ENCODE measurements at regions of chr2 and their contacts with region 1.

Region 1: DNA sequence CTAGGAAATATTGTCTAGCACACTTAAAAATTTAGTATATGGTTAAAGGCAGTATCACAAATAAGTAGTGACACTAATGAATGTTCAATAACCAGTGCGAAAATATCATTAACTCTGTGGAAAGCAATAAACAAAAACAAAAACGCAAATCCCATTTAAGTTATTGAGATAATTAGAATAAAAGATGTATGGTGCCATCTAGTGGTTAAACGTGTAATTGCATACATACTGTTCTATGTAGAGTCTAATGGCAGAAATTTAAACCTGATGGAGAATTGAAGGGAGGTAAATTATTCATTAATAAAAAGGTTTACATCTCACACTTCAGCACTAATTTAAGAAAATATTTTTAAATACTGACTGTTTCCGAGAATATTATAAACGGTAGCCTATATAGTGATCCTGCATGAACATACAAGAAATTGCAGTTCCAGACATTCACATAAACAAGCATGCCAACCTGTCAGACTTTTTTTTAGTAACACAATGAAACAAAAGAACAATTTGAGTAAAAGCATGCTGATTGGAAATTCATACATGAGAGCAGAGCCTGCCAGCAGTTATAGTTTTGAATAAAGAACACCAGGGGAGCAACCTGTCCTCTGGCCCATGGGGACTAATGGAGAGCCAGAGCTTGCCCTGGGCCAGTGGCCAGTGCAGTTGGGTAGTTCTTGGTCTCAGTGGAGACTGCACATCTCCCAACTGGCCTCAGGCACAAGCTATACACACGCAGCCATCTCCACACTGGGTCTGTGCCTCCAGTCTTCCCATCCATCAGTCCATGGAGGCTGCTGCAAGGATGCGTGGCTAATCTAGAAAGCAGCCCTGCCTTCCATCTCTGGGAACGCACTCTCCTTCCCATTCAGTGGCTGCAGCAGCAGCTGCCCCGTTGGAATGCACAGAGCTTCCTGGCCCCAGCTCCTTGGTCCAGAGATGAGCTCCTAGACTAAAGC is 28.0 kb downstream of the GCG start:
- DNase-seq: no peak
- H3K4me3 ChIP-seq: no peak overlapping the region
- H3K27ac ChIP-seq: no peak overlapping the region
- H3K4me1 ChIP-seq: peaks cover 0 to 21% (median 13%) of the 10 kb centered on the region in 6 donors
- H3K27me3 ChIP-seq: no peaks in the 10 kb centered on the region
- CTCF ChIP-seq: peak; percentile 74 to 91 (median 85)
- POLR2A ChIP-seq: no peak

Region 2: DNA sequence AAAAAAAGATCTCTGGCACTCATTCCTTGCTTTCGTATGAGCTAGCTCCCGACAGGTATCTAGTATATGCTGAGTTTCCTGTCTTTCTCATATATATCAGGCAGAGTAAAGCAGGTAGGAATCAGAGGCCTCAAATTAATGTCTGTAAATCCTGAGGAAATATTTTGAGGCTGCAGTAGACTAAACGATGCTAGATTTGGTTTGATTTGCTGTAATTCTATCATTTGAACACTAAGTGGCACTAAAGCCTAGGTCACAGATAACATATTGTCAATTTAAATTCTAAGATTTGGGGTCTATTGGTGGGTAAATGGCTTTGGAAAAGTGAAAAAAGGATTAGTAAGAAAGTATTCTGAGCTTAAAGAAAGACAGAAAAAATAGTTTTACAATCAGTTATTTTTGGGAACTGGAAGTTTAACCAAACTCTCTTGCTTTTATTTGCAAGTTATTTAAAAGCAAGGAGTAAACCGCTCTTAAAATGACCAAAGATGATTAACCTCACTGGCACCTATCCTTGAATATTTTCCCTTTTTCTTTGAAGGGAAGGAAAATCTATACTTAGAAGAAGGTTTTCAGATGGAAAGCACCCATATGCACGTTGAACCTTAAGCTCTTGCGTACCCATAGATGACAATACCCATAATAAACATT is 537.4 kb before region 1 on chr2:
- intact Hi-C with region 1: loop called (anchors 10 kb)
- DNase-seq: no peak
- H3K4me3 ChIP-seq: no peak overlapping the region
- H3K27ac ChIP-seq: no peak overlapping the region
- H3K4me1 ChIP-seq: no peaks in the 10 kb centered on the region
- H3K27me3 ChIP-seq: no peaks in the 10 kb centered on the region
- CTCF ChIP-seq: peak; percentile 23 to 70 (median 51)
- POLR2A ChIP-seq: no peak

Region 3: GRCh38 chr2:161992526-161992925 is 131.6 kb before region 1 on chr2:
- intact Hi-C with region 1: no loop called
- DNase-seq: no peak
- H3K4me3 ChIP-seq: no peak overlapping the region
- H3K27ac ChIP-seq: peak overlapping the region in 5 of 8 donors; percentile 8 to 65 (median 43)
- H3K4me1 ChIP-seq: peaks cover 7 to 38% (median 12%) of the 10 kb centered on the region in 6 donors
- H3K27me3 ChIP-seq: peaks cover 0 to 4% (median 0%) of the 10 kb centered on the region in 7 donors
- CTCF ChIP-seq: no peak
- POLR2A ChIP-seq: no peak

Region 4: DNA sequence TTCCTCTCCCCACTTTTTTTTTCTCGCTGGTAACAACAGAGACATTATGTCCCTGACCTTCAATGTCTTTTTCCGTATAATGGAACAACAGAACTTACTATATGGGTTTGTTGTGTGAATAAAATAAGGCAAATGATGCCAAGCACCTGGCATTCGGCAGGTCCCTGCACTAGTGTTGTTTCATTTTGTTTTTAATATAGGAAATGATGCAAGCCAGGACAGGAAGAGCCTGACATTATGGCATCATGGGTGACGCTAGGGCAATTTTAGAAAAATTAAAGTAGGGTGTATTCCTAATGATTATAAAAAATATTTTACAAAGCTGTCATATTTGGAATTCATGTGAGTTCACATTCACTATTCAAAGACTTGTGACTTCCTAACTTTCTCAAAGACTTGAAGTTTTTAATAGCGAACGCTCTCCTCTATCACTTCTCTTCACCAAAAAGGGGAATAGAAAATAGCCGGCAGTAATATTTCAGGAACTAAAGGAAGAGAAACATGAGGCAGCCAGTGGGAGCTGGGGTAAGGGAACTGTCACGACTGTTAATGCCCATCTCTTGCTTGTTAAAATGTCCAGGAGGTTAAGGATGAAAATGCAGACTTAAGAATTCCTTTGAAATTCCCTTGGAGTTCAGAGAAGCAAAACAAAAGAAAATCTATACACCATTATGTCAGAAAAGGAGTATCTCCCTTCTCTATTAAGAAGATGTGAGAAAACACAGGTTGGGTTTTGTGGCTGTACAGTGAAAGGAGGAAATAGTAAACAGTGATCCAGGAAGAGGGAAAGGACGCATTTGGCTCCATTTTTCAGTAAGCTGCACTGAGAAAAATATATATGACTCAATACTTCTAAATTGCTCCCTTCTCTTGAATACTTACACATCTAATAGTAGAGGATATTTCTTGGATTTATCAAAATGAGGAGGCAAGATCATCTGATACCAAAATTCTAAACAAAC is 110.3 kb before region 1 on chr2:
- intact Hi-C with region 1: loop called (anchors 5 kb)
- DNase-seq: no peak
- H3K4me3 ChIP-seq: peak overlapping the region in 1 of 8 donors; percentile 16
- H3K27ac ChIP-seq: peak overlapping the region; percentile 49 to 77 (median 64)
- H3K4me1 ChIP-seq: peaks cover 0 to 43% (median 17%) of the 10 kb centered on the region in 6 donors
- H3K27me3 ChIP-seq: no peaks in the 10 kb centered on the region
- CTCF ChIP-seq: no peak
- POLR2A ChIP-seq: no peak

Measured in spleen (tissue), 13 donors.